ENCODE measurements at regions of chr3 and their contacts with region 1.

Region 1: DNA sequence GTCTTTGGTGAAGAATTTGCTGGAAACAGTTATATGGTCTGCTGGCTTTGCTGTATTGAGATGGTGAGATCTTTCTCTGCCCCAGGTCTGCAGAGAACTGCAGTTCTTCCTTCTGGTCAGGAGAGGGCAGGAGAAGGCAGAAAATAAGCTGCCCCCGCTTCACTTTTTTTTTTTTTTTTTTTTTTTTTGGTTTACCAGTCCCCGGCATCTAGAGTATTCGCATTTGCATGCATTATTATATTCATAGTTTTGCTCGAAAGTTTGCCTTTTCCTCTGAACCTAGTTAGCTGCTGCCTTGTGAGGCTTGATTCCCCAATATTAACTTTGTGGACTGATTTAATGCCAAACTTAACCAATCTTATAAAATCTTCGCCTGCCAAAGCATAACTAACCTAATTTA is 10.6 kb upstream of the PARL start:
- DNase-seq: no peak
- ATAC-seq: peak; percentile 85
- H3K4me3 ChIP-seq: no peak overlapping the region
- H3K27ac ChIP-seq: no peak overlapping the region
- H3K4me1 ChIP-seq: peaks cover 8% of the 10 kb centered on the region; the same call in 1 of the 2 replicates
- H3K27me3 ChIP-seq: no peaks in the 10 kb centered on the region
- CTCF ChIP-seq: peak; percentile 79 to 91 (median 89)
- EP300 ChIP-seq: no peak
- POLR2A ChIP-seq: no peak
- RAD21 ChIP-seq: peak; percentile 98

Region 2: DNA sequence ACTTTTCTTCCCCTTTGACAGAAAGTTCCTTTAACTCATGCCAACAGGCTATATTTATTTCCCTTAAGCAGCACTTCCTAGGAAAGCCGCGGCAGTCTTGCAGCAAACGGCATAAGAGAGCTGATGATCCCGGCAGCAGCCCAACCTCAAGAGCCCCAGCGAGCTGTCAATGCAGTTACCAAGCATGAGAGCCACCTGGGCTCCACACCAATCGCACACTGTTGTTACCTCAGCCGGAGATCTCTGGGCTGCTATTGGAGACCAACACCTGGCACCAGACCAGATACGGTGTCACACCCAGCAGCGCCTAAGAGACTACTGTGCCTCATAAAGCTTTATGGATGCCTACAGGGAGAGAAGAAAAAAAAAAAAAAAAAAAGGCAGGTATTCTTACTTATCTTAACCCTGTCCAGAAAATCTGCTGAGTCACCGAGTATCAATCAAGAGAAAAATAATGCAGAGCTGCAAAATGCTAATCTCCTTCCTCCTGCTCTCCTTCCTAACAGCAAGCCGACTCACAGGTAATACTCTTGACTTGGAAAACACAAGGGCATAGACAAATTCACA is 110.7 kb after region 1 on chr3:
- CTCF ChIA-PET with region 1: interaction called, 21 read pairs
- POLR2A ChIA-PET with region 1: no interaction called
- RAD21 ChIA-PET with region 1: interaction called, 4 read pairs
- SMC1A ChIA-PET with region 1: no interaction called
- in situ Hi-C with region 1: no loop called
- intact Hi-C with region 1: no loop called
- DNase-seq: peak; percentile 27
- ATAC-seq: peak; percentile 95
- H3K4me3 ChIP-seq: peak overlapping the region; percentile 33; the same call in 1 of the 2 replicates
- H3K27ac ChIP-seq: peak overlapping the region; percentile 73
- H3K4me1 ChIP-seq: peaks cover 12% of the 10 kb centered on the region
- H3K27me3 ChIP-seq: no peaks in the 10 kb centered on the region
- CTCF ChIP-seq: no peak
- EP300 ChIP-seq: no peak
- POLR2A ChIP-seq: no peak
- RAD21 ChIP-seq: no peak

Region 3: DNA sequence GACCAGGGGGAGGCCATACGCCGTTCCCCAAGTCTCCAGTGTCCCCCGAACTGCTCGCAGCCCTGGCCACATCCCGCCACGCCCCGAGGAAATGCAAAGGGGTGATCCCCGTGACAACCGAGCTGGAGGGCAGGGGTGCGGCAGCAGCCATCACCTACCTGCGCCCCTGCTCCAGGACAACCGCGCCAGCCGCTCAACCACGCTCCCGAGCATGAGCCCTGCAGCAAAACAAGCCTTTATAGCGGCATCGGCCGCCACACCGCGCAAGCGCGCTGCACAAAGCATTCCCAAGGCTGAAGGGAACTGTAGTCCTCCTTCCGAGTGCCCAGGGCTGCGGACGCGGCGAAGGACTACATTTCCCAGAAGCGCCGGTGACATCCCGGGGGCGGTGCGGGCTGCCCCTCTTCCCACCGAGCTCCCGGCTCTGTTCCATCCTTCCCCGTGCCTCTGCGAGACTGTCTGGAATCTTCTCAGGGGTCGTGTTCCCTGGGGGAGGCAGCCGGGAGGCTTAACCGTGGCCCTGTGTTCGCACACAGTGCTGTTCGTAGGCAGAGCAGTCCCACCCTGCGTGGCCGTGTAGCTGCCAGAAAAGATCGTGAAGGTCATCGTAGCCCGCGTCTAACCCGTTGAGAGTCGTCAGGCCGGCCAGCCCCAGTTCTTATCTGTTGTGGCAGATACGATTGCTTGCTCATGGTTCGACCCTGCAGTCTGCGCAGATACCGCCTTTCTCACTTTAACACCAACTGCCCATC is 122.6 kb after region 1 on chr3 and contains the start of gene ABCC5:
- CTCF ChIA-PET with region 1: interaction called, 84 read pairs
- POLR2A ChIA-PET with region 1: interaction called, 4 read pairs
- RAD21 ChIA-PET with region 1: interaction called, 28 read pairs
- SMC1A ChIA-PET with region 1: interaction called, 32 read pairs
- in situ Hi-C with region 1: loop called (anchors 5 kb)
- intact Hi-C with region 1: loop called (anchors 1 kb)
- DNase-seq: peak; percentile 67
- ATAC-seq: peak; percentile 98
- H3K4me3 ChIP-seq: peak within 1 kb of the TSS; percentile 97
- H3K27ac ChIP-seq: no peak within 1 kb of the TSS; the same call in 1 of the 2 replicates
- H3K4me1 ChIP-seq: peaks cover 6% of the 10 kb centered on the region
- H3K27me3 ChIP-seq: no peaks in the 10 kb centered on the region
- CTCF ChIP-seq: no peak
- EP300 ChIP-seq: no peak
- POLR2A ChIP-seq: peak; percentile 65
- RAD21 ChIP-seq: no peak
- polyA plus RNA-seq, gene ABCC5: 6.1 to 7.2 TPM

Region 4: GRCh38 chr3:184229394-184230080 is 334.2 kb after region 1 on chr3 and contains the start of gene VWA5B2:
- CTCF ChIA-PET with region 1: interaction called, 11 read pairs
- POLR2A ChIA-PET with region 1: no interaction called
- RAD21 ChIA-PET with region 1: interaction called, 5 read pairs
- SMC1A ChIA-PET with region 1: interaction called, 10 read pairs
- in situ Hi-C with region 1: no loop called
- intact Hi-C with region 1: no loop called
- DNase-seq: no peak
- ATAC-seq: peak; percentile 96
- H3K4me3 ChIP-seq: peak within 1 kb of the TSS; percentile 29; the same call in 1 of the 2 replicates
- H3K27ac ChIP-seq: no peak within 1 kb of the TSS
- H3K4me1 ChIP-seq: no peaks in the 10 kb centered on the region
- H3K27me3 ChIP-seq: peaks cover 16 to 18% of the 10 kb centered on the region in 2 experiments
- CTCF ChIP-seq: peak in 1 of 3 experiments; percentile 18; a peak in 1 of 6 replicates
- EP300 ChIP-seq: no peak
- POLR2A ChIP-seq: no peak; the same call in 1 of the 2 replicates
- RAD21 ChIP-seq: no peak
- polyA plus RNA-seq, gene VWA5B2: not detected

Region 5: GRCh38 chr3:184289426-184289938 is 394.2 kb after region 1 on chr3:
- CTCF ChIA-PET with region 1: interaction called, 12 read pairs
- POLR2A ChIA-PET with region 1: interaction called, 3 read pairs
- RAD21 ChIA-PET with region 1: interaction called, 4 read pairs
- SMC1A ChIA-PET with region 1: interaction called, 9 read pairs
- in situ Hi-C with region 1: loop called (anchors 5 kb)
- intact Hi-C with region 1: loop called (anchors 1 kb)
- DNase-seq: no peak
- ATAC-seq: peak; percentile 88
- H3K4me3 ChIP-seq: no peak overlapping the region
- H3K27ac ChIP-seq: no peak overlapping the region
- H3K4me1 ChIP-seq: no peaks in the 10 kb centered on the region
- H3K27me3 ChIP-seq: no peaks in the 10 kb centered on the region; a peak in 1 of 4 replicates
- CTCF ChIP-seq: peak; percentile 63 to 68 (median 68)
- EP300 ChIP-seq: no peak
- POLR2A ChIP-seq: no peak
- RAD21 ChIP-seq: peak; percentile 76

Region 6: GRCh38 chr3:184543843-184544512 is 648.7 kb after region 1 on chr3:
- CTCF ChIA-PET with region 1: interaction called, 3 read pairs
- POLR2A ChIA-PET with region 1: no interaction called
- RAD21 ChIA-PET with region 1: no interaction called
- SMC1A ChIA-PET with region 1: interaction called, 3 read pairs
- in situ Hi-C with region 1: no loop called
- intact Hi-C with region 1: loop called (anchors 5 kb)
- DNase-seq: no peak
- ATAC-seq: peak; percentile 88
- H3K4me3 ChIP-seq: no peak overlapping the region
- H3K27ac ChIP-seq: no peak overlapping the region
- H3K4me1 ChIP-seq: no peaks in the 10 kb centered on the region
- H3K27me3 ChIP-seq: peaks cover 0 to under 1% of the 10 kb centered on the region in 2 experiments; a peak in 2 of 4 replicates
- CTCF ChIP-seq: peak; percentile 74 to 83 (median 81)
- EP300 ChIP-seq: no peak
- POLR2A ChIP-seq: no peak
- RAD21 ChIP-seq: peak; percentile 73

Measured in GM12878 (cell line).